ENCODE measurements at regions of chr6 and their contacts with region 1.

Region 1: DNA sequence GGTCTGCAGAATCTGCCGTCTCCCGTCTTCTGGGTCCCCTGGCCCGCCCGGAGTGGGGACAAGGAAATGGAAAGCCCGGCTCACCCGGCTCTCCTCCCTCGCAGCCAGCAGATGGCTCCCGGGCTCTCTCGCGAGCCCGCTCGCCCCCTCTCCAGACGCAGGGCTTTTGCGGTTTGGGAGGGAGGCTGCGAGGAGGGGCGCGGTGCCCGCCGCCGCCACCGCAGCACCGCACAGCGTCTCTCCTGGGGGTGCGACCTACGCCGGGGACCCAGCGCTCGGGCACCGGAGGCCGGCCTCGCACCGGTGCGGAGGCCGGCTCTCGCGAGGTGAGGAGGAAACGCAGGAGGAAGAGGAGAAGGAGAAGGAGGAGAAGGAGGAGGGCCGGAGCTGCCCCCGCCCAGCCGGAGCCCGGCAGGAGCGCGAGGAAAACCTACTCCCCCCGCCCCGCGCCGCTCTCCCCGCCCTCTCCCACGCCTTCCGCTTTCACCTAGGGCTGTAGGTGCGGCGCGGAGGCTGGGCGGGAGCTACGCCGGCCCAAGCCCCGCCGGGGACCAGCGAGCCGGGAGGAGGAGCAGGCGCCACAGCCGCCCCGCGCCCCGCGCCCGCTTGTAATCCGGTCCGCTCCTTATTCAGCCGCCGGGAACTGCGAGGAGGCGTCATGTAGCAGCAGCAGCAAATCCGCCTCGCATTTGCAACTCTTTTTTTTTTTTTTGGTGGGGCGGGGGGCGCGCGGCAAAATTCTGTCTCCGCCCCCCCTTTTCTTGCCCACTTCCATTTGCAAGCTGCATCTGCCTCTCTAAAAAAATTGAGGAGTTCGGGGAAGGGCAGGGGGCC is at the start of gene CARMIL1:
- DNase-seq: peak; percentile 57 to 73 (median 63)
- H3K4me3 ChIP-seq: peak within 1 kb of the TSS; percentile 53 to 66
- H3K4me3 Mint-ChIP-seq: peak within 1 kb of the TSS; percentile 82 to 98 (median 93)
- H3K27ac ChIP-seq: peak within 1 kb of the TSS; percentile 42
- H3K27ac Mint-ChIP-seq: peak within 1 kb of the TSS; percentile 81 to 96 (median 90)
- H3K4me1 ChIP-seq: peaks cover 20% of the 10 kb centered on the region
- H3K4me1 Mint-ChIP-seq: peaks cover 21 to 44% (median 28%) of the 10 kb centered on the region in 4 donors
- H3K27me3 ChIP-seq: no peaks in the 10 kb centered on the region
- H3K27me3 Mint-ChIP-seq: peaks cover 0 to 8% of the 10 kb centered on the region in 2 donors
- total RNA-seq, gene CARMIL1: 3.5 TPM

Region 2: DNA sequence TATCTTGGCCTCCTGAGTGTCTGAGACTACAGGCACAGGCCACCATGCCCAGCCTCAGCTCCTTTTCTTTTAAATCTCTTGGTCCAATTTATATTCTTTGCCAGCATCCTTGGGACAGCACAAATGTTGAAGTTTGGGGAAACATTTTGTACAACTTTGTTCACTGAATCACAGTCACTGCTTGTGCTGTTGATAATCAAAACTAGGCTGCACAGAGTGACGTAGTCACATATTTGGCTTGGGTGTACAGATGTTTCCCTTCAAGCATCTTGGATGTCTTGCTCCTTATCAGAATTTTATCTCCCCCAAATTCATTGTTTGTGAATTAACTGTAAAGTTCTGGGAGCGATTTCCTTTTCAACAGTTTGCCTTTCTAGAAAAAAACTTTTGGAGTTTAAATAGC is 17.9 kb after region 1 on chr6:
- CTCF ChIA-PET with region 1: interaction called, 13 read pairs
- POLR2A ChIA-PET with region 1: no interaction called
- intact Hi-C with region 1: no loop called
- DNase-seq: no peak
- H3K4me3 ChIP-seq: no peak overlapping the region
- H3K4me3 Mint-ChIP-seq: no peak overlapping the region
- H3K27ac ChIP-seq: no peak overlapping the region
- H3K27ac Mint-ChIP-seq: no peak overlapping the region
- H3K4me1 ChIP-seq: no peaks in the 10 kb centered on the region
- H3K4me1 Mint-ChIP-seq: peaks cover 0 to 49% (median 4%) of the 10 kb centered on the region in 4 donors
- H3K27me3 ChIP-seq: no peaks in the 10 kb centered on the region
- H3K27me3 Mint-ChIP-seq: no peaks in the 10 kb centered on the region

Region 3: DNA sequence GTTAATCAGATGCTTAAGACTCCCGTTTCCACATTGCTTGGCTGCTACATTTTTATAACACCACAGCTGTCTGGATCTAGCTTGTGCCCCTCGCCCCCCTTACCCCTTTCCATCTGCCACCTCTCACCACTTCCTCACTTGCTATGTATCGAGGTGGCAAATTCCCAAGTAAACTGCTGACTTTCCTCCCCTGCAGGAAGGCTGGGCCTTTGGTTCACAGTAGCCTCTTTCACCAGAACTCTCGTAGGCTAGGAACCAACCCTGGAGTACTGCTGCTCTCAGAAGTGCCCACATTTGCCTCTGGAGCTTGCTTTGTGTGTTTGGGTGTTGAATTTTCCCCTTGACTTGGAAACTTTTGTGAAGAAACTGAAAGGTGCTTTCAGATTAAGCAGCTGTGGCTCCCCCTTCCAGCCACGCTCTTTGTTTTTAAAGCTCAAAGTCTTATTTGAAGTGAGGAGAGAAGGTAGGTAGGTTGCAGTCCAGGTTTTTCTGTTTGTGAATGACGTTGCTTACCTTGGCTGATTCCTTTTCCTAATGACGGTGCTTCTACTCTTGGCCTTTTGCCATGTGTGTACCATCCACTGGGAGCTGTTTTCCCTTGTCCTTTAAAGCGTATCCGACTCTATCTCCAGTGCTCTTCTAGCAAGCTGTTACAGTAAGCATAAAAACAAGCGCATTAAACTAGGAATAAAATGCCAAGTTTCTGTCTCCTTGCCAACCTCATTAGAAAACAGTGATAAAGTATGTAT is 90.5 kb after region 1 on chr6:
- CTCF ChIA-PET with region 1: interaction called, 12 read pairs
- POLR2A ChIA-PET with region 1: interaction called, 3 read pairs
- intact Hi-C with region 1: loop called (anchors 2 kb)
- DNase-seq: peak in 1 of 5 donors; percentile 34
- H3K4me3 ChIP-seq: peak overlapping the region; percentile 5 to 32
- H3K4me3 Mint-ChIP-seq: peak overlapping the region; percentile 57 to 88 (median 74)
- H3K27ac ChIP-seq: peak overlapping the region; percentile 28
- H3K27ac Mint-ChIP-seq: peak overlapping the region; percentile 56 to 97 (median 81)
- H3K4me1 ChIP-seq: peaks cover 49% of the 10 kb centered on the region
- H3K4me1 Mint-ChIP-seq: peaks cover 44 to 91% (median 66%) of the 10 kb centered on the region in 4 donors
- H3K27me3 ChIP-seq: no peaks in the 10 kb centered on the region
- H3K27me3 Mint-ChIP-seq: no peaks in the 10 kb centered on the region

Region 4: DNA sequence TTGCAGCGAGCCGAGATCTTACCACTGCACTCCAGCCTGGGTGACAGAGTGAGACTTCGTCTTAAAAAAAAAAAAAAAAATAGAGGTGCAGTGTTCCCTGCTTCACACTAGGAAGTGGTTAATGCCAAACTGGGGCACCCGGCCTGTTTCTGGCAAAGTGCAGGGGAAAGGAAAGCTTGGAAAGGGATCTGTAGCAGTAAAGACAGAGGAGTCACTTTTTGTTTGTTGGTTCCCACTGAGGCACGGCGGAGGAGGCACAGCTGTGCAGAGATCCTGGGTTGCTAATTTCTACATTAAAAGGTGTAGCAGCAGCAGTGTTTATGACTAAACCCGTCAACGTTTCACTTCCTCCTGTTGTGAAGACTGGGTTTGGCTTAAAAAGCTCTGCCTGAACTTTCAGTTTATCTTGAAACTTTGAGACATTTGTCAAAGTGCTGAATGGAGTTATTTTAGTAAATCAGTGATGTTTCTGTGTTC is 125.6 kb after region 1 on chr6:
- CTCF ChIA-PET with region 1: interaction called, 4 read pairs
- POLR2A ChIA-PET with region 1: interaction called, 11 read pairs
- intact Hi-C with region 1: loop called (anchors 2 kb)
- DNase-seq: peak in 4 of 5 donors; percentile 37 to 58 (median 37)
- H3K4me3 ChIP-seq: peak overlapping the region; percentile 9 to 36
- H3K4me3 Mint-ChIP-seq: no peak overlapping the region
- H3K27ac ChIP-seq: peak overlapping the region; percentile 45
- H3K27ac Mint-ChIP-seq: no peak overlapping the region
- H3K4me1 ChIP-seq: peaks cover 35% of the 10 kb centered on the region
- H3K4me1 Mint-ChIP-seq: peaks cover 0 to 26% (median 13%) of the 10 kb centered on the region in 4 donors
- H3K27me3 ChIP-seq: no peaks in the 10 kb centered on the region
- H3K27me3 Mint-ChIP-seq: no peaks in the 10 kb centered on the region